ENCODE measurements at regions of chr1 and their contacts with region 1.

Region 1: GRCh38 chr1:89125913-89126580 is at the start of gene GBP2:
- DNase-seq: peak in 7 of 9 donors; percentile 35 to 72 (median 42)
- ATAC-seq: peak; percentile 82
- H3K4me3 ChIP-seq: peak within 1 kb of the TSS; percentile 84
- H3K4me3 Mint-ChIP-seq: peak within 1 kb of the TSS; percentile 88 to 100 (median 98)
- H3K27ac ChIP-seq: peak within 1 kb of the TSS; percentile 76
- H3K27ac Mint-ChIP-seq: peak within 1 kb of the TSS; percentile 94 to 100 (median 99)
- H3K4me1 ChIP-seq: peaks cover 30 to 32% of the 10 kb centered on the region in 2 donors
- H3K4me1 Mint-ChIP-seq: peaks cover 39 to 75% (median 63%) of the 10 kb centered on the region in 7 donors
- H3K27me3 ChIP-seq: no peaks in the 10 kb centered on the region
- H3K27me3 Mint-ChIP-seq: peaks cover 0 to 2% (median 0%) of the 10 kb centered on the region in 5 donors
- total RNA-seq, gene GBP2: 74.0 to 200 (median 185) TPM

Region 2: DNA sequence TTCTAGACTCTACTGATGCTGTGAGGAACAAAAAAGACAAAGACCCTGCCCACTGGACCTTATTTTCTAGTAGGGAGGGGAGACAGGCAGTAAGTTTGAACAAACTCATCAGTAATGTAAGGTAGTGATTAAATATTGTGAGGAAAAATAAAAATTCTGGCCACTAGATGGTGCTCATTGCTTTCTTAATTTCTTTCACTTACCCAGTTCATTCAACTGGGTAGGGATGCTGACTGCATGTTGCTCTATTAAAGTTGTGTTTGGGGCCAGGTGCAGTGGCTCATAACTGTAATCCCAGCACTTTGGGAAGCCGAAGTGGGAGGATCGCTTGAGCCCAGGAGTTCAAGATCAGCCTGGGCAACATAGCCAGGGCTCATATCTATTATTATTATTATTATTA is 127.3 kb before region 1 on chr1:
- CTCF ChIA-PET with region 1: no interaction called
- POLR2A ChIA-PET with region 1: interaction called, 5 read pairs
- intact Hi-C with region 1: loop called in 1 of 2 experiments (anchors 1 kb)
- DNase-seq: peak in 7 of 9 donors; percentile 59 to 81 (median 76)
- ATAC-seq: peak; percentile 90
- H3K4me3 ChIP-seq: no peak overlapping the region
- H3K4me3 Mint-ChIP-seq: no peak overlapping the region
- H3K27ac ChIP-seq: no peak overlapping the region
- H3K27ac Mint-ChIP-seq: peak overlapping the region in 1 of 9 donors; percentile 68
- H3K4me1 ChIP-seq: peaks cover 12 to 19% of the 10 kb centered on the region in 2 donors
- H3K4me1 Mint-ChIP-seq: peaks cover 17 to 49% (median 34%) of the 10 kb centered on the region in 7 donors
- H3K27me3 ChIP-seq: no peaks in the 10 kb centered on the region
- H3K27me3 Mint-ChIP-seq: peaks cover 0 to 2% (median 0%) of the 10 kb centered on the region in 5 donors

Region 3: DNA sequence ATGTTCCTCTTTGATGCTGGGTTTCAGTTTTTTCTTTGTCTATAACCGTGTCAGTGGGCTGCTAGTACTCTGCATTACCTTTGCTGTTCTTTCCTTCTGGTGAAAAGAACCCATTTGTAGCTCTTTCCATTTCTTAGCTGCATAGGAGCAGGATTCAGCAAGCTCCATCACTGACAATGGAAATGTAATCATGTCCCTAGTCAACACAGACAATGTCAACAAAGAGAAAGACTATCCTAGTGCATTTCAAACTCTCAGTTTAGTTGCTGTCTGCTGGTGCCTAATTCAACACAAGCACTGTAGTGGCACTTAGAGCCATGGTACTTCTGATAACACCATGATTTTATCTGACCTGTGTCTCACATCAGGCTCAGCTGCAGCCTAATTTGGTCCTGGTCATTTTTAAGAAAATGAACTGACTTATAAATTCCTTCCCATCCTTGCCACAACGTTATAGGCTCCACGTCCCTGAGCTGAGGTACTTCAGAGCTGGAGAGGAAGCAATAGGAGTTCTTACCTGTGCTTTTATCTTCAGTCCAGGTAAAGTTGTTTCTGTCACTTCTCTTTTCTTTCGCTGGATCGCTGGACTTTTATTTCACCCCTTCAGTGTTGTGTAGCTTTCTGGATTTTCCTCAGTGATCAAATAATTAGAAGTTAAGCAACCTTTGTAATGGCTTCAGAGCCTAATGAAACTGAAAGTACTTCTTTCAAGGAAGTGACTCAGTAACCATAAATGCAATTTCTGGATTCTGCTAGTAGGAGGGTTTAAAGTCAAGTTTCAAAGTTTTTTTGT is 103.7 kb before region 1 on chr1 and contains the start of gene GBP3:
- CTCF ChIA-PET with region 1: no interaction called
- POLR2A ChIA-PET with region 1: interaction called, 14 read pairs
- intact Hi-C with region 1: loop called in 1 of 2 experiments (anchors 1 kb)
- DNase-seq: peak in 7 of 9 donors; percentile 22 to 52 (median 41)
- ATAC-seq: peak; percentile 84
- H3K4me3 ChIP-seq: peak within 1 kb of the TSS; percentile 75
- H3K4me3 Mint-ChIP-seq: peak within 1 kb of the TSS; percentile 83 to 99 (median 95)
- H3K27ac ChIP-seq: peak within 1 kb of the TSS; percentile 84
- H3K27ac Mint-ChIP-seq: peak within 1 kb of the TSS; percentile 85 to 99 (median 93)
- H3K4me1 ChIP-seq: peaks cover 16 to 21% of the 10 kb centered on the region in 2 donors
- H3K4me1 Mint-ChIP-seq: peaks cover 30 to 58% (median 48%) of the 10 kb centered on the region in 7 donors
- H3K27me3 ChIP-seq: no peaks in the 10 kb centered on the region
- H3K27me3 Mint-ChIP-seq: no peaks in the 10 kb centered on the region
- total RNA-seq, gene GBP3: 15.9 to 39.9 (median 31.9) TPM

Region 4: DNA sequence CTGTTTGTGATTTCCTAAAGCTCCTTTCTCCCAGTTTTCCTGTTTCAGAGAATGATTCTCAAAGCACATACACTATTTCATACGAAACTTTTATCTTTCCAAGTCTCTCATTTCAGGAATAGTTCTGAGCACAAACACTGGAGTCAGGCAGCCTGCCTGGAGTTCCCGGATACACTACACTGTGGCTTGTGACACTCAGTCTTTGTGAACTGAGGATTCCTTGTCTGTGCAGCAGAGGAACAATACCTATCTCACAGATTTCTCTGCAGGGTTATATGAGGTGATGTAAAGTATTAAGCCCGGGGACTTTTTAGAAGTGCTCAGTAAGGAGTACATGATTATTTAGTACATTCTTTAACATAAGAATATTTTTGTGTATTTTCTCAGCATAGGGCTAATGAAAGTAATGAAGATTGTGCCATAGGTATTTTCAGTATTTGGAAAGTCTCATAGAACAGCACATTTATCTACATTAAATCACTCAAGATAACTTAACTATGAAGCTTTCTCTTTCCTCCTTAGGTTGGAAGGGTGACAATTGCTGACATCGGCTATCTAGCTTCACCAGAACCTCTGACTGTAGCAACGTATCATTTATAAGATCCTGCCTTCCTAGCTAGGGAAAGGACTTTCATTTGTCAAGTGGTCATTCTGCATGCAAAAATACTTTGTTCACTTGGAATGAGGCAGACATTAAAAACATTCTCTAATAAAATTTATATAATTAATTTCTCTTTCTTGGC is 13.0 kb before region 1 on chr1:
- CTCF ChIA-PET with region 1: interaction called, 5 read pairs
- POLR2A ChIA-PET with region 1: interaction called, 11 read pairs
- intact Hi-C with region 1: loop called in 1 of 2 experiments (anchors 2 kb)
- DNase-seq: no peak
- ATAC-seq: no peak
- H3K4me3 ChIP-seq: no peak overlapping the region
- H3K4me3 Mint-ChIP-seq: no peak overlapping the region
- H3K27ac ChIP-seq: no peak overlapping the region
- H3K27ac Mint-ChIP-seq: peak overlapping the region in 8 of 9 donors; percentile 52 to 83 (median 67)
- H3K4me1 ChIP-seq: no peaks in the 10 kb centered on the region
- H3K4me1 Mint-ChIP-seq: peaks cover 13 to 47% (median 31%) of the 10 kb centered on the region in 7 donors
- H3K27me3 ChIP-seq: no peaks in the 10 kb centered on the region
- H3K27me3 Mint-ChIP-seq: no peaks in the 10 kb centered on the region

Region 5: GRCh38 chr1:89198491-89199072 is 72.5 kb after region 1 on chr1 and contains the start of gene GBP4:
- CTCF ChIA-PET with region 1: interaction called, 3 read pairs
- POLR2A ChIA-PET with region 1: interaction called, 40 read pairs
- intact Hi-C with region 1: loop called (anchors 1 kb)
- DNase-seq: peak; percentile 25 to 49 (median 41)
- ATAC-seq: peak; percentile 73
- H3K4me3 ChIP-seq: peak within 1 kb of the TSS; percentile 92
- H3K4me3 Mint-ChIP-seq: peak within 1 kb of the TSS; percentile 91 to 99 (median 97)
- H3K27ac ChIP-seq: peak within 1 kb of the TSS; percentile 88
- H3K27ac Mint-ChIP-seq: peak within 1 kb of the TSS; percentile 91 to 99 (median 95)
- H3K4me1 ChIP-seq: peaks cover 42 to 47% of the 10 kb centered on the region in 2 donors
- H3K4me1 Mint-ChIP-seq: peaks cover 51 to 82% (median 71%) of the 10 kb centered on the region in 7 donors
- H3K27me3 ChIP-seq: no peaks in the 10 kb centered on the region
- H3K27me3 Mint-ChIP-seq: no peaks in the 10 kb centered on the region
- total RNA-seq, gene GBP4: 29.1 to 174 (median 37.4) TPM

Region 6: GRCh38 chr1:89298461-89298860 is 172.4 kb after region 1 on chr1:
- CTCF ChIA-PET with region 1: no interaction called
- POLR2A ChIA-PET with region 1: interaction called, 14 read pairs
- intact Hi-C with region 1: no loop called
- DNase-seq: no peak
- ATAC-seq: no peak
- H3K4me3 ChIP-seq: no peak overlapping the region
- H3K4me3 Mint-ChIP-seq: peak overlapping the region in 1 of 10 donors; percentile 57
- H3K27ac ChIP-seq: no peak overlapping the region
- H3K27ac Mint-ChIP-seq: peak overlapping the region in 4 of 9 donors; percentile 6 to 75 (median 59)
- H3K4me1 ChIP-seq: peaks cover 6 to 19% of the 10 kb centered on the region in 2 donors
- H3K4me1 Mint-ChIP-seq: peaks cover 16 to 71% (median 44%) of the 10 kb centered on the region in 7 donors
- H3K27me3 ChIP-seq: no peaks in the 10 kb centered on the region
- H3K27me3 Mint-ChIP-seq: no peaks in the 10 kb centered on the region